ENCODE measurements at regions of chr7 and their contacts with region 1.

Region 1: DNA sequence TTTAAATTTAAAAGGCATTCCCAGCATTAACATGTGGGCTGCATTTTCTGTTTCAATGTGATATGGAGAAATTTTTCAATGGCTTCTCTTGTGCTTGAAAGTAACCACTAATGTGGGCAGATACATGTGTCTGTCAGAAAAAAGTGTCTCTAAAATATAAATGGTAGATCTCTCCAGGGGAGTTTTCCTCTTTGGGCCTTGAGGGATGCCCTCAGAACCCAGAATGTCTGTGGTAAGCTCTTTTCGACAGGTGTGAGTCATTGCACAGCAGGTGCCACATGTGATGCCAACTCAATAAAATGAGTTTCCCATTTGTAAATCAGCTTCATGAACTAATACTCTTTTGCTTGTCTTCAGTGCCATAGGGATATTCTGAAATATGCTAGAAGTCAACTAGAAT is 221.0 kb downstream of the SEMA3E start:
- DNase-seq: no peak
- ATAC-seq: peak; percentile 20
- H3K4me3 Mint-ChIP-seq: peak overlapping the region; percentile 29
- H3K27ac Mint-ChIP-seq: peak overlapping the region; percentile 41
- H3K4me1 Mint-ChIP-seq: peaks cover 72% of the 10 kb centered on the region
- H3K27me3 Mint-ChIP-seq: no peaks in the 10 kb centered on the region
- CTCF ChIP-seq: no peak

Region 2: GRCh38 chr7:83398172-83398571 is 29.8 kb before region 1 on chr7:
- CTCF ChIA-PET with region 1: no interaction called
- POLR2A ChIA-PET with region 1: no interaction called
- DNase-seq: no peak
- ATAC-seq: no peak
- H3K4me3 Mint-ChIP-seq: no peak overlapping the region
- H3K27ac Mint-ChIP-seq: no peak overlapping the region
- H3K4me1 Mint-ChIP-seq: no peaks in the 10 kb centered on the region
- H3K27me3 Mint-ChIP-seq: no peaks in the 10 kb centered on the region
- CTCF ChIP-seq: no peak

Region 3: DNA sequence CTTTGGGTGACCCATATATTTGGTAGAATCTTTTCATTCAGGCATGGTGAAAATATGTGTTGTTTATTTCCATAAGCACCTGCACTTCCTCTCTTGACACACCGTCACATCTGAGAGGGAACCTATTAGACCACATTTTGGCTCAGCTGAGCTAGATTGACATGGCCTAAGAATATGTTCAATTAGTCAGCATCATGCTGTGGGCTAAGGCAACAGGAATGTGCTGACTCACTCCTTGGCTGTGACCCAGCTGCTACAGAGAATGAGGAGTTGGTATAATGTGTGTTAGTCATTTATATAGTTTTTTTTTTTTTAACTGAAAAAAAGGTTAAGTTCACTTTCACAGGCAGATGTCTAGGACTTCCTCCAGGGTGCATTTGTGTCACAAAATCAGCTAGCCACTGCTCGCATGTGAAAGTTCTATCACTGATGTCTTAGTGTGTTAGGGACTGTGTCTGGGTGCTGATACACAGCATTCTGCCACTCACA is 40.4 kb after region 1 on chr7:
- CTCF ChIA-PET with region 1: interaction called, 3 read pairs
- POLR2A ChIA-PET with region 1: interaction called, 12 read pairs
- DNase-seq: peak; percentile 56
- ATAC-seq: peak; percentile 68
- H3K4me3 Mint-ChIP-seq: peak overlapping the region; percentile 16; the same call in 1 of the 2 replicates
- H3K27ac Mint-ChIP-seq: peak overlapping the region; percentile 89
- H3K4me1 Mint-ChIP-seq: peaks cover 62% of the 10 kb centered on the region
- H3K27me3 Mint-ChIP-seq: no peaks in the 10 kb centered on the region
- CTCF ChIP-seq: no peak

Measured in WTC11 (cell line).